ENCODE measurements at regions of chr4 and their contacts with region 1.

Region 1: GRCh38 chr4:150867148-150867547 is 147.9 kb downstream of the LRBA start:
- DNase-seq: peak; percentile 84
- H3K4me3 Mint-ChIP-seq: no peak overlapping the region
- H3K27ac Mint-ChIP-seq: no peak overlapping the region
- H3K4me1 Mint-ChIP-seq: no peaks in the 10 kb centered on the region
- H3K27me3 Mint-ChIP-seq: no peaks in the 10 kb centered on the region
- CTCF ChIP-seq: peak; percentile 49

Region 2: GRCh38 chr4:149980941-149981340 is 886.2 kb before region 1 on chr4:
- CTCF ChIA-PET with region 1: interaction called, 11 read pairs
- POLR2A ChIA-PET with region 1: no interaction called
- intact Hi-C with region 1: no loop called
- DNase-seq: peak; percentile 72
- H3K4me3 Mint-ChIP-seq: no peak overlapping the region
- H3K27ac Mint-ChIP-seq: no peak overlapping the region
- H3K4me1 Mint-ChIP-seq: no peaks in the 10 kb centered on the region
- H3K27me3 Mint-ChIP-seq: no peaks in the 10 kb centered on the region
- CTCF ChIP-seq: peak; percentile 66

Region 3: DNA sequence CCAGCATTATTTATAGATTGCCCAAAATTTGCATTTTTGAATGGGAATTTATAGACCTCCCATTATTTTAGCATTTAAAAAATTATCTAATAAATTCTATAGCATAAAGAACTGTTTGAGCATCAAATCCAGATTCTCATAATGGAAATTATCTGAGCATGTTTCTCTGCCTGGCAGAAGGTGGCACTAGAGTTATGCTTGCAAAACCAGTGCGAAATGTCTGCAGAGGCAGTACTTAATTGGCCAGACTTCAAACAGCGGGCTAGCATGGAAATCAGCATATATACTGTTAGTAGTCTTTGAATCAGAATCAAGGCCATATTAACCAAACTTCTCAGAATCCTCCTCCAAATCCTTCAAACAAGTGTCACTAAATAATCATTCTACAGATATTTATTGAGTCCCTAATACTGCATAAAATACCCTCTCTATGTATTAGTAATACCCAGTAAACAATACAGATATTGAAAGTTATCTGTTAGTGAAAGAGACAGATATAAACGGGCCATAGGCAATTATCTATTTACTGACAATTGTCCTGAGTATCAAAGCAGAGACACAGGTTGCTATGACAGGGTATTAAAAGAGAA is 867.6 kb before region 1 on chr4:
- CTCF ChIA-PET with region 1: interaction called, 4 read pairs
- POLR2A ChIA-PET with region 1: no interaction called
- intact Hi-C with region 1: loop called (anchors 2 kb)
- DNase-seq: peak; percentile 69
- H3K4me3 Mint-ChIP-seq: no peak overlapping the region
- H3K27ac Mint-ChIP-seq: no peak overlapping the region
- H3K4me1 Mint-ChIP-seq: peaks cover 22% of the 10 kb centered on the region
- H3K27me3 Mint-ChIP-seq: no peaks in the 10 kb centered on the region
- CTCF ChIP-seq: peak; percentile 63

Region 4: GRCh38 chr4:150297861-150298474 is 569.2 kb before region 1 on chr4:
- CTCF ChIA-PET with region 1: interaction called, 29 read pairs
- POLR2A ChIA-PET with region 1: no interaction called
- intact Hi-C with region 1: loop called (anchors 1 kb)
- DNase-seq: peak; percentile 69
- H3K4me3 Mint-ChIP-seq: no peak overlapping the region
- H3K27ac Mint-ChIP-seq: no peak overlapping the region
- H3K4me1 Mint-ChIP-seq: no peaks in the 10 kb centered on the region
- H3K27me3 Mint-ChIP-seq: no peaks in the 10 kb centered on the region
- CTCF ChIP-seq: peak; percentile 60

Region 5: GRCh38 chr4:150593996-150594395 is 273.2 kb before region 1 on chr4:
- CTCF ChIA-PET with region 1: no interaction called
- POLR2A ChIA-PET with region 1: no interaction called
- intact Hi-C with region 1: loop called (anchors 10 kb)
- DNase-seq: no peak
- H3K4me3 Mint-ChIP-seq: no peak overlapping the region
- H3K27ac Mint-ChIP-seq: no peak overlapping the region
- H3K4me1 Mint-ChIP-seq: no peaks in the 10 kb centered on the region
- H3K27me3 Mint-ChIP-seq: no peaks in the 10 kb centered on the region
- CTCF ChIP-seq: peak; percentile 18

Region 6: DNA sequence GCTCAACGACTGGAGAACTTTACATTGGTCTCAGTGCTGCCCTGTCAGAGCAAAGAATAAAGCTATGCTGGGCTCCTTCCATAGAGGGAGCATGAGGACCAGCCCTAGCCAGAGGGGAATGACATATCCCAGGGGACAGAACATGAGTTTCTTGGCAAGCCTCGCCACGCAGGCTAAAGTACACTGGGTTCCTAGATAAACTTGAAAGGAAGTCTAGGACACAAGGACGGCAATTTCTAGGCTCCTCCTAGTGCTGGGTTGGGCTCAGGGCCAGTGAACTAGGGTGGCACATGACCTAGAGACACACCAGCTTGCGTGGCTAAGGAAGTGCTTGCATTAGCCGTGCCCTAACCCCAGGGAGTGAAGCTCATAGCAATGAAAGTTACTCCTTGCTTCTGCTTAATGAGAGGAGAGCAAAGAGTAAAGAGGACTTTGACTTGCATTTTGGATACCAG is 144.2 kb before region 1 on chr4:
- CTCF ChIA-PET with region 1: interaction called, 17 read pairs
- POLR2A ChIA-PET with region 1: interaction called, 8 read pairs
- intact Hi-C with region 1: loop called (anchors 2 kb)
- DNase-seq: peak; percentile 93
- H3K4me3 Mint-ChIP-seq: peak overlapping the region; percentile 43
- H3K27ac Mint-ChIP-seq: peak overlapping the region; percentile 94
- H3K4me1 Mint-ChIP-seq: peaks cover 31% of the 10 kb centered on the region
- H3K27me3 Mint-ChIP-seq: no peaks in the 10 kb centered on the region
- CTCF ChIP-seq: peak; percentile 24